ENCODE measurements at regions of chr4 and their contacts with region 1.

Region 1: GRCh38 chr4:81471588-81472288 is at the start of gene RASGEF1B:
- DNase-seq: peak; percentile 97
- ATAC-seq: peak; percentile 93
- H3K4me3 Mint-ChIP-seq: peak within 1 kb of the TSS; percentile 86
- H3K27ac Mint-ChIP-seq: peak within 1 kb of the TSS; percentile 88
- H3K4me1 Mint-ChIP-seq: peaks cover 38% of the 10 kb centered on the region
- H3K27me3 Mint-ChIP-seq: no peaks in the 10 kb centered on the region
- total RNA-seq, gene RASGEF1B: 3.4 to 4.0 TPM

Region 2: GRCh38 chr4:81378386-81378785 is 93.4 kb before region 1 on chr4:
- CTCF ChIA-PET with region 1: no interaction called
- POLR2A ChIA-PET with region 1: no interaction called
- intact Hi-C with region 1: no loop called
- DNase-seq: no peak
- ATAC-seq: no peak
- H3K4me3 Mint-ChIP-seq: no peak overlapping the region
- H3K27ac Mint-ChIP-seq: no peak overlapping the region
- H3K4me1 Mint-ChIP-seq: no peaks in the 10 kb centered on the region
- H3K27me3 Mint-ChIP-seq: peaks cover 14% of the 10 kb centered on the region

Region 3: DNA sequence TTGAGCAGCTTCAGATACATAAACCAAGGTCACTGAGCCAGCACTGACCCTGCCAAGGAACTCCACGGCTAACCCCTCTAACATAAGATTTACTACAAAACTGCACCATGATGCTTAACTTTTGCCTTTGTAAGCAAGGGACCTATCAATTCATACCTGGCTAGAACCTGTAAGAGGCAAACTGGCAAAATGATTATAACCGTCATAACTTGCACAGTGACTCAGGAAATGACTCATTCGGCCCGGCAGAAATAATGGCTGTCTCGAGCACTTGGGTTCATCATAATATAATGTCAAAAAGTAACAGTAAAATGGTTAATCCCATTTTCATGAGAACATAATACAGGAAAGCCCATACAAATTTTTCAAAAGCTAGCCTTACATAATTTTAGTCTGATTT is 17.2 kb before region 1 on chr4:
- CTCF ChIA-PET with region 1: interaction called, 14 read pairs
- POLR2A ChIA-PET with region 1: no interaction called
- intact Hi-C with region 1: no loop called
- DNase-seq: peak; percentile 74
- ATAC-seq: peak; percentile 96
- H3K4me3 Mint-ChIP-seq: no peak overlapping the region
- H3K27ac Mint-ChIP-seq: peak overlapping the region; percentile 56
- H3K4me1 Mint-ChIP-seq: peaks cover 18% of the 10 kb centered on the region
- H3K27me3 Mint-ChIP-seq: no peaks in the 10 kb centered on the region

Region 4: DNA sequence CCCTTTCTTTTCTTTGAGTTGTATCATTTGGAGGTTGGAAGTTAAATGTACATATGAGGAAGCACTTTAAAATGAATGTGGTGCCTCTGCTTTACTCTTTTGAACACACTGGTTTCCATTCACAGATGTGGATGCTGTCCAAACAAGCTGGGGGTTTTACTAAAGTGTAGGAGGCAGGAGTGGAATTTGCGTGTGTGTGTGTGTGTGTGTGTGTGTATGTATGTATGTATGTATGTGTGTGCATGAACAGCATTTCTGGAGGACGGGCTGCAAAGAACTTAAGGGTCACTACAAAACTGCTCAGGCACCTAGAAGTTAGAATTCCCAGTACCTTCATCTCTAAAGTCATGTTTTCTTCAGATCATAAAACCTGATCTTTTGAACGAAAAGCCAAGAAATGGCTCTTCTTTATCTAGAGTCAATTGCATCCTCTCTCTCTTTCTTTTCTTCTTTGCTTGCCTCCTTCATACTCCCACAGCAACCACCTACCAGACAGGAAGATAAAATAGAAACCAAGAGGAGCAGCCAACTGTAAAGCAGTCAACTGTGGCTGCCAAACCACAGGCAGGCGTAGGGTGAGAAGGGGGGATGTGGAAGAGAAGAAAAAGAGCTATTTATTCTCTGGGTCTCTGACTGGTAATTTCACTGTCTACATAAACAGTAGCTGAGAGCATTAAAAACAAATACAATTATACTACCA is 177.0 kb after region 1 on chr4:
- CTCF ChIA-PET with region 1: interaction called, 5 read pairs
- POLR2A ChIA-PET with region 1: interaction called, 5 read pairs
- intact Hi-C with region 1: loop called (anchors 5 kb)
- DNase-seq: peak; percentile 65
- ATAC-seq: peak; percentile 46
- H3K4me3 Mint-ChIP-seq: peak overlapping the region; percentile 26
- H3K27ac Mint-ChIP-seq: peak overlapping the region; percentile 26
- H3K4me1 Mint-ChIP-seq: peaks cover 60% of the 10 kb centered on the region
- H3K27me3 Mint-ChIP-seq: no peaks in the 10 kb centered on the region

Region 5: GRCh38 chr4:81827577-81828202 is 356.0 kb after region 1 on chr4:
- CTCF ChIA-PET with region 1: no interaction called
- POLR2A ChIA-PET with region 1: interaction called, 3 read pairs
- intact Hi-C with region 1: loop called in 1 of 2 experiments (anchors 5 kb)
- DNase-seq: peak; percentile 61
- ATAC-seq: peak; percentile 96
- H3K4me3 Mint-ChIP-seq: no peak overlapping the region
- H3K27ac Mint-ChIP-seq: peak overlapping the region; percentile 63
- H3K4me1 Mint-ChIP-seq: peaks cover 17% of the 10 kb centered on the region
- H3K27me3 Mint-ChIP-seq: peaks cover 10% of the 10 kb centered on the region

Region 6: DNA sequence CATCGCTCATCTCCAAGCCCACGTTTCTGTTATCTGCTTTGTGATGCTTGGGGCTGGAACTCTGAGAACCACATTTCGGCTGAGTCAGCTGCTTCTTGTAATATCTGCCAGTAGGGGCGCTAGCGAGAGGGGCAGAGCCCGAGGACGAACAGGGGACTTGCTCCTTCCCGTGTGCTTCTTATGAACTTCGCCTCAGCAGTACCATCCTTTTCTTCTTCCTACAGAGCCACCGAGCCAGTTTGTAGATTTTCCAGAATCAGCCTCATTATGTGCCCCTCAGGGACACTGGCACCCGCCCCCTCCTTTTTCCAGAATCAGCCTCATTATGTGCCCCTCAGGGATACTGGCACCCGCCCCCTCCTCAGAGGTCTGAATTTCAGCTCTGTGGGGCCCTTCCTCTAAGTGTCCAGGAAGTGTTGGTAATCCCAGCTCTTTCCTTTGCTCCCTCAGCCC is 441.7 kb after region 1 on chr4:
- CTCF ChIA-PET with region 1: interaction called, 10 read pairs
- POLR2A ChIA-PET with region 1: no interaction called
- intact Hi-C with region 1: loop called (anchors 5 to 10 kb)
- DNase-seq: peak; percentile 77
- ATAC-seq: peak; percentile 81
- H3K4me3 Mint-ChIP-seq: no peak overlapping the region
- H3K27ac Mint-ChIP-seq: no peak overlapping the region
- H3K4me1 Mint-ChIP-seq: peaks cover 7% of the 10 kb centered on the region
- H3K27me3 Mint-ChIP-seq: peaks cover 7% of the 10 kb centered on the region

Region 7: GRCh38 chr4:82031376-82031927 is 559.7 kb after region 1 on chr4:
- CTCF ChIA-PET with region 1: no interaction called
- POLR2A ChIA-PET with region 1: no interaction called
- intact Hi-C with region 1: no loop called
- DNase-seq: no peak
- ATAC-seq: peak; percentile 36
- H3K4me3 Mint-ChIP-seq: no peak overlapping the region
- H3K27ac Mint-ChIP-seq: no peak overlapping the region
- H3K4me1 Mint-ChIP-seq: peaks cover 8% of the 10 kb centered on the region
- H3K27me3 Mint-ChIP-seq: peaks cover 12% of the 10 kb centered on the region

Region 8: DNA sequence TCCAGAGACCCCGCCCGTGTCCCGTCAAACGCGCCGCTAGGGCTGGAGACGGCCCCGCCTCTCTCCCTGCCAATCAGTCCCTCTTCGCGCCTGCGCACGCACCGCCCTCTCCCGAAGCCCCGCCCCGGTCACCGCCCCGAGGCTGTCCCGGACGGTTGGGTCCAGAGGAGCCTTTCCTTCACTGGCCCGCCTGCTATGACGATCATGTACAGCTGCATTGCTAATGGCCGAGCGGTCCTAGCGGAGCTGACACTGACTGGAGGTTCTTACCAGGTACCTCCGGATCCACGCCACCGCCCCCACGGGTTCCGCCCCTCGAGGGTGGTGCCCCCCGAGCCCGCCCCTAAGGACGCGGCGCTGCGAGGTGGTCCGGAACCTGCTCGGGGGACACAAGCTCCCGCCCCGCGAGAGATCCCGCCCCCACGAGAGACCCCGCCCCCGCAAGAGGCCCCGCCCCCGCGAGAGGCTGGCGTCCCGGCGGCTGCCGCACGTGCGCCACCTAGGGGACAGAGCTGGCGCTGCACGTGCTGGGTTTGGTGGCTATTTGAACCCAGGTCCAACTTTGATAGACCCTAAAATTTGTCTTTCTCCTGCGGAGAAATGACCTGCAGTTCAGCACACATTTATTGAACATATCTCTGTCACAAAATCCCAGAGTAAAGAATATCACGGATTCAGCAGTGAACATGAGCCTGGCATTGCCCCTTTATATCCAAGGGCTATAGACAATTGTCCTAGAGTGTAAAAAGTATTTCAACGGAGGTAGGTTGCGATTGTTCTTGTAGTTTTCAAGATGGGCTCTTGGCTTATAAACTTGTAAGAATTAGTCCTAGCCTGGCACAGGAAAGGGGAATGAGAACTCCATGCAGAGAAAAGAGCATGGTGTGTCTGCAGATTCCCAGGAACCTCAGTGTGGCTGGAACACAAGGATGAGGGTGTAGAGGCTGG is 813.4 kb after region 1 on chr4:
- CTCF ChIA-PET with region 1: no interaction called
- POLR2A ChIA-PET with region 1: no interaction called
- intact Hi-C with region 1: loop called (anchors 1 kb)
- DNase-seq: peak; percentile 100
- ATAC-seq: peak; percentile 99
- H3K4me3 Mint-ChIP-seq: peak overlapping the region; percentile 68
- H3K27ac Mint-ChIP-seq: peak overlapping the region; percentile 62
- H3K4me1 Mint-ChIP-seq: peaks cover 13% of the 10 kb centered on the region
- H3K27me3 Mint-ChIP-seq: no peaks in the 10 kb centered on the region

Region 9: GRCh38 chr4:82900331-82901128 is 1428.8 kb after region 1 on chr4 and contains the start of gene THAP9:
- CTCF ChIA-PET with region 1: no interaction called
- POLR2A ChIA-PET with region 1: no interaction called
- intact Hi-C with region 1: loop called in 1 of 2 experiments (anchors 5 kb)
- DNase-seq: peak; percentile 99
- ATAC-seq: peak; percentile 92
- H3K4me3 Mint-ChIP-seq: no peak within 1 kb of the TSS
- H3K27ac Mint-ChIP-seq: no peak within 1 kb of the TSS
- H3K4me1 Mint-ChIP-seq: peaks cover 39% of the 10 kb centered on the region
- H3K27me3 Mint-ChIP-seq: no peaks in the 10 kb centered on the region
- total RNA-seq, gene THAP9: 1.7 to 2.6 TPM